Breast epithelium (tissue), 4 donors: ENCODE measurements at regions of chr2 and their contacts with region 1.

Region 1: GRCh38 chr2:191051825-191052778 is 38.1 kb upstream of the STAT1 start:
- DNase-seq: no peak
- H3K4me3 ChIP-seq: no peak overlapping the region
- H3K27ac ChIP-seq: no peak overlapping the region
- H3K4me1 ChIP-seq: no peaks in the 10 kb centered on the region
- H3K27me3 ChIP-seq: no peaks in the 10 kb centered on the region
- CTCF ChIP-seq: peak; percentile 50 to 76 (median 67)
- POLR2A ChIP-seq: no peak

Region 2: DNA sequence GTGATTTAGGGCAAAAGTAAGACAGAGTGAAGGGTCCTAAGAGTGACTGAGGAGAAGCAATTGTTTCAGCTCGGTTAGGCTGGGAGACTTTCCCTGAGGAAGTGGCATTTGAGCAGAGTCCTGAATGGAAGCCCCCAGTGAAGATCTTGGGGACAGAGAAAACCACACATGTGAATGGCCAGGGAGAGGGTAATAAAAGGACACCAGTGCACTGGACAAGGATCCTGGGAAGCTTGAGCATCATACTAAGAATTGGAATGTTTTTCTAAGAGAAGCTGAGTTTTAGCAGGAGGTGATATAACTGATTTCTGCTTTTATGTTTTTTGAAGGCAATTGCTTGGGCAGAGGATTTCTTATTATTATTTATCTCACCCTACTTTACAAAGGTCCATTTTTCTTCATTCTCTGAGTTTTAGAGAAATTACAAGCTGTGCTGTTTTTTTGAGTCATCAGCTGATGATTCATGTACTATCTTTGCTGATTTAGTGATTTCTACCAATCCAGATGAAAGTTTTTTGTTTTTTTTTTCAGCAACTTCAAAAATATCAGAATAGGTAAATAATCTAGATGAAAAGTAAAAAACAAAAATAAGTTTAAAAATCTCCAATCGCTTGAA is 600.4 kb before region 1 on chr2:
- intact Hi-C with region 1: no loop called
- DNase-seq: no peak
- H3K4me3 ChIP-seq: no peak overlapping the region
- H3K27ac ChIP-seq: no peak overlapping the region
- H3K4me1 ChIP-seq: no peaks in the 10 kb centered on the region
- H3K27me3 ChIP-seq: no peaks in the 10 kb centered on the region
- CTCF ChIP-seq: no peak
- POLR2A ChIP-seq: no peak

Region 3: DNA sequence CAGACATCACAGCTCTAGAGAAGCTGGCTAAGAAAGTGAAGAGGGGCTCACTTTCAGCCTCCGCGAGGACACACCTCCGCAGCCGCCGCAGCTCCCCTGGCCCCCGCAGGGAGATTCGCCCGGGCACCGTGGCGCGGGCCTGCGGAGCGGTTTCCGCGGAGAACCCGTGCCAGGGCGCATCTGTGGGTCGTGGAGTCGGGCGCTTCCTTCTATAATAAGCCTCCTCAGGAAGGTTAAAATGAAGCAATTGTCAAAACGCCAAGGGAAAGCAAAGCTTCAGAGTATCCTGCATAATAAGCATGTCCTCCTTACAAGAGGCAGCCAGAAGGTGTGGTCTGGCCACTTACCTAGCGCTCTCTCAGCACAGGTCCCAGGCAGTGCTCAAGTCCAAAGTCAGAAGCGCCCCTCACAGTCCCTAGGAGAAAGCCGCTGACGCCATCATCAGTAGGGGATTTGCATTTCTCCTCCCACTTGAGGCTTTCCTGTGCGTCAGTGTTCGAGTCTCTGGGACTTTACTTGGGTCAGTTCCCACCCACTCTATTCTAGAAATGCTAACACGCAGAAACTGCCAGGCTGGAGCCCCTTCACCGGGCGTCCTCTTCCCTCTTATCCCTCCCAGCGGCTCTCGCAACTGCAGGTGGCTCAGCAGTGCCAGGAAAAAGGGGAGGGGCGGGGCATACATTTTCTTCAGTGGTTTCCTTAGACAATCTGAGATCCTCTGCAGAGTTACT is 98.7 kb after region 1 on chr2 and contains the start of gene STAT4:
- intact Hi-C with region 1: loop called (anchors 5 kb)
- DNase-seq: peak in 1 of 2 donors; percentile 56
- H3K4me3 ChIP-seq: peak within 1 kb of the TSS; percentile 39 to 77 (median 57)
- H3K27ac ChIP-seq: peak within 1 kb of the TSS; percentile 22 to 67
- H3K4me1 ChIP-seq: no peaks in the 10 kb centered on the region
- H3K27me3 ChIP-seq: no peaks in the 10 kb centered on the region
- CTCF ChIP-seq: no peak
- POLR2A ChIP-seq: no peak
- total RNA-seq, gene STAT4: 1.6 to 5.9 (median 3.6) TPM

Region 4: GRCh38 chr2:192544371-192544955 is 1492.4 kb after region 1 on chr2:
- intact Hi-C with region 1: no loop called
- DNase-seq: no peak
- H3K4me3 ChIP-seq: no peak overlapping the region
- H3K27ac ChIP-seq: no peak overlapping the region
- H3K4me1 ChIP-seq: no peaks in the 10 kb centered on the region
- H3K27me3 ChIP-seq: no peaks in the 10 kb centered on the region
- CTCF ChIP-seq: no peak
- POLR2A ChIP-seq: no peak